ENCODE measurements at regions of chr11 and their contacts with region 1.

Region 1: GRCh38 chr11:124586238-124586860 is 16.6 kb downstream of the OR8A1 start:
- DNase-seq: peak in 1 of 2 experiments; percentile 34
- H3K4me3 ChIP-seq: no peak overlapping the region
- H3K27ac ChIP-seq: no peak overlapping the region
- H3K4me1 ChIP-seq: no peaks in the 10 kb centered on the region
- H3K27me3 ChIP-seq: peaks cover 42% of the 10 kb centered on the region
- CTCF ChIP-seq: peak; percentile 73

Region 2: DNA sequence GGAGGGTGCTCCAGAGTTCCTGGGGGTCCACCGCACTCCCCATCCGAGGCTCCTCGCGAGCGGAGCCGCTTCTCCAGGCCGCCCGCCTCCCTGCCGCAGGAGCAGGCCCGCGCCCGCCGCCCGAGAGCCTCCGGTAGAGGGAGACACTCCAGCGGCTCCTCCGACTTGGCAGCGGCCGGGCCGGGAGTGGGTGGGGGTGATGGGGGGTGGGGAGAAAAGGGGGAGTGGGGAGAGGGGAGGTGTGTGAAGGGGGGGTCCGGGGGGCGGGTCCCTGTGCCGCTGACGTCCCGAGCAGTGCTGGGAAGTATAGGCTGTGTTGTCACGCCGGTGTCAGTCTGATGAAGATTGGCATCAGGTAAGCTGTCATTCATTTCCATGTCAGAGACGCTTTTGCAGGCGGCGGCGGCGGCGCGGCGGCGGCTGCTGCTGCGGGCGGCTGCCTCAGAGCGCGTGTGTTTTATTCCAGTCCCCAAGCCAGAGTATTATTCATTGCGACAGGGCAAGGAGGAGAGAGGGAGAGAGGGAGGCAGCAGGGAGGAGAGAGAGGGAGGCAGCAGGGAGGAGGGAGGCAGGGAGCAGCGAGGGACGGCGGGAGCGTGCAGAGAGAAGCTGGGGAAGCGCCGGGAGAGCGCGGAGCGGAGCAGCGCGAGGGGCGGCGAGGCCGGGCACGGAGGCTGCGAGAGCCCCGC is 578.2 kb after region 1 on chr11 and contains the start of gene PKNOX2:
- CTCF ChIA-PET with region 1: interaction called, 16 read pairs
- POLR2A ChIA-PET with region 1: no interaction called
- intact Hi-C with region 1: no loop called
- DNase-seq: peak in 1 of 2 experiments; percentile 40
- H3K4me3 ChIP-seq: peak within 1 kb of the TSS; percentile 42; the same call in 1 of the 2 replicates
- H3K27ac ChIP-seq: no peak within 1 kb of the TSS
- H3K4me1 ChIP-seq: no peaks in the 10 kb centered on the region
- H3K27me3 ChIP-seq: peaks cover 17% of the 10 kb centered on the region
- CTCF ChIP-seq: 0 out of 2 replicates have a peak, but pooled peaks have one; percentile 34
- total RNA-seq, gene PKNOX2: not detected in 2 replicates

Measured in PC-9 (cell line).